Tibial artery (tissue), 4 donors: ENCODE measurements at regions of chr17 and their contacts with region 1.

Region 1: DNA sequence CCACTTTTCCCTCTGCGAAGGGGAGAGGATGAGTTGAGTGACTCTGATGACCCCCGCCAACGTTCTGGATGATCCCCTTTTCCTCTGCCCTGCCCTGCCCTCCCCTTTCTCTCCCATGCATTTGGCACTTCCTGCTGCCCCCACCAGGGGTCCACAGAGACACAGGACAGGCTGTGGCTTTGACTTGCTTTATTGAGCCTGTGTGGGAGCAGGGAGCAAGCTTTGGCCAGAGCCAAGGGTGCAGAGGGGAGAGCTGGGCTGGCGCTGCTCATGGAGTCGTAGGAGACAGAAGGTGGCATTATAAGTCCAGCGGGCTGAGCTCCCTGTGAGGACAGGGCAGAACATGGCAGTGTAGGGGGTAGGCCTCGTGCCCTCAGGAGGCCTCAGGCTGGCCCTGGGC is 1.6 kb downstream of the PPY start:
- DNase-seq: no peak
- H3K4me3 ChIP-seq: no peak overlapping the region
- H3K27ac ChIP-seq: no peak overlapping the region
- H3K4me1 ChIP-seq: peaks cover 0 to 8% (median 8%) of the 10 kb centered on the region in 4 donors
- H3K27me3 ChIP-seq: peaks cover 0 to 26% of the 10 kb centered on the region in 2 donors
- CTCF ChIP-seq: peak in 1 of 2 experiments; percentile 22

Region 2: GRCh38 chr17:43745541-43745940 is 195.1 kb before region 1 on chr17:
- intact Hi-C with region 1: no loop called
- DNase-seq: peak in 1 of 2 donors; percentile 37
- H3K4me3 ChIP-seq: no peak overlapping the region
- H3K27ac ChIP-seq: peak overlapping the region; percentile 45 to 62
- H3K4me1 ChIP-seq: peaks cover 0 to 51% (median 20%) of the 10 kb centered on the region in 4 donors
- H3K27me3 ChIP-seq: no peaks in the 10 kb centered on the region
- CTCF ChIP-seq: no peak

Region 3: DNA sequence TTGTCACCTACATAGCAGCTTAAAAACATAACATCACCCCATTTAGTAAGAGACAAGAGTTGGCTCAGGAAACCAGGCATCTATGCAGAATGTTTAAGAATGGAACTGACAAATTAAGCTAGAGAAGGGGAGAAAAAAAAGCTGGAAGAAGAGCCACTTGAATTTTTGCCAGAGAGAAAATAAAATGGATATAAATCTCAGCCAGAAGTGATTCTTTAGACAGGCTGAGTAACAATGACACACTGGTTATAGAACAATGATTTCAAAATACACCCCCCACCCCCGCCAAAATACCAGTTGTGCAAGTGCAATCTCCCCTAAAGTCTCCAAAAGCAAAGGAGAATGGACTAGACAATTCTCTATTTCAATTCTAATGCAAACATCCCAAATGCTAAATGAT is 103.4 kb after region 1 on chr17:
- intact Hi-C with region 1: loop called (anchors 10 kb)
- DNase-seq: no peak
- H3K4me3 ChIP-seq: no peak overlapping the region
- H3K27ac ChIP-seq: no peak overlapping the region
- H3K4me1 ChIP-seq: peaks cover 0 to 34% (median 17%) of the 10 kb centered on the region in 4 donors
- H3K27me3 ChIP-seq: no peaks in the 10 kb centered on the region
- CTCF ChIP-seq: no peak